ENCODE measurements at regions of chr12 and their contacts with region 1.

Region 1: GRCh38 chr12:546921-547845 is 87.4 kb downstream of the B4GALNT3 start:
- DNase-seq: peak in 1 of 2 experiments; percentile 89
- H3K4me3 ChIP-seq: no peak overlapping the region
- H3K27ac ChIP-seq: no peak overlapping the region
- H3K4me1 ChIP-seq: peaks cover 0 to 8% (median 4%) of the 10 kb centered on the region in 4 experiments; a peak in 3 of 7 replicates
- H3K27me3 ChIP-seq: no peaks in the 10 kb centered on the region
- CTCF ChIP-seq: peak; percentile 92 to 99 (median 94)
- EP300 ChIP-seq: no peak
- POLR2A ChIP-seq: no peak
- RAD21 ChIP-seq: peak; percentile 99

Region 2: GRCh38 chr12:442235-442884 is 104.8 kb before region 1 on chr12:
- CTCF ChIA-PET with region 1: interaction called, 163 read pairs
- POLR2A ChIA-PET with region 1: interaction called, 8 read pairs
- DNase-seq: peak in 1 of 2 experiments; percentile 88
- H3K4me3 ChIP-seq: no peak overlapping the region
- H3K27ac ChIP-seq: no peak overlapping the region
- H3K4me1 ChIP-seq: no peaks in the 10 kb centered on the region
- H3K27me3 ChIP-seq: no peaks in the 10 kb centered on the region
- CTCF ChIP-seq: peak; percentile 41 to 86 (median 76)
- EP300 ChIP-seq: no peak
- POLR2A ChIP-seq: no peak
- RAD21 ChIP-seq: peak; percentile 64 to 77

Region 3: GRCh38 chr12:464484-465267 is 82.5 kb before region 1 on chr12:
- CTCF ChIA-PET with region 1: interaction called, 163 read pairs
- POLR2A ChIA-PET with region 1: no interaction called
- DNase-seq: no peak
- H3K4me3 ChIP-seq: no peak overlapping the region
- H3K27ac ChIP-seq: no peak overlapping the region
- H3K4me1 ChIP-seq: peaks cover 0 to 4% (median 0%) of the 10 kb centered on the region in 4 experiments; a peak in 2 of 7 replicates
- H3K27me3 ChIP-seq: peaks cover 0 to 20% (median 8%) of the 10 kb centered on the region in 4 experiments; a peak in 5 of 7 replicates
- CTCF ChIP-seq: no peak
- EP300 ChIP-seq: no peak
- POLR2A ChIP-seq: no peak
- RAD21 ChIP-seq: no peak

Region 4: DNA sequence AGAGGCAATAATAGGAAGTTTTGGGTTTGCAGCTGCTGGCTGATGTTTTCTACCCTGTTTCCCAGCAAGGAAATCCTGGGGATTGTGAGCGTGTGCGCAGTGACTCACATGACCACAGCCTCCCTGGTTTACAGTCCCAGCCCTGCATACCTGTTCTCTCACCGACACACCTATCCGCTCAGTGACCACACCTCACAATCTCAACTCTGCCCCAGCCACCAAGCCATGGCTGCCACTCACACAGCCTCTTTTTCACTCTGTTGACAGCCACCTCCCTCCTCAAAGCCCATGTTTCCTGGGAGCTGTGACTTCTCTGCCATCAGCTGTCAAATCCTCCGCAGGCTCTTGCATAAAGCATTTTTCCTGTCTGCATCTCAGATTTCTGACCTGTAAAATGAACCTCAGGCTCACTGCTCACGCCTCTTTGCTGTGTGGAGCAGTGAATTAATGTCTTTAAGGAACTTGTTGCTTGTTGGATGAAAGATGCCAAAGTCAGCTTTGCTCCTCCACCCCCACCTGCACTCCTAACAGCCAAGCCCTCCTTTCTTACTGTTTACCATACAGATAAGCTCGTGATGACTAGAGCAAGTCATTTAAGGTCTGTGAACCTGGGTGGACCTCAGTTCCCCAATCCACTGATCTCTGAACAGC is 43.9 kb before region 1 on chr12:
- CTCF ChIA-PET with region 1: interaction called, 11 read pairs
- POLR2A ChIA-PET with region 1: no interaction called
- DNase-seq: no peak
- H3K4me3 ChIP-seq: no peak overlapping the region
- H3K27ac ChIP-seq: no peak overlapping the region
- H3K4me1 ChIP-seq: peaks cover 0 to 6% (median 3%) of the 10 kb centered on the region in 4 experiments; a peak in 6 of 7 replicates
- H3K27me3 ChIP-seq: no peaks in the 10 kb centered on the region
- CTCF ChIP-seq: no peak
- EP300 ChIP-seq: no peak
- POLR2A ChIP-seq: no peak
- RAD21 ChIP-seq: no peak

Region 5: DNA sequence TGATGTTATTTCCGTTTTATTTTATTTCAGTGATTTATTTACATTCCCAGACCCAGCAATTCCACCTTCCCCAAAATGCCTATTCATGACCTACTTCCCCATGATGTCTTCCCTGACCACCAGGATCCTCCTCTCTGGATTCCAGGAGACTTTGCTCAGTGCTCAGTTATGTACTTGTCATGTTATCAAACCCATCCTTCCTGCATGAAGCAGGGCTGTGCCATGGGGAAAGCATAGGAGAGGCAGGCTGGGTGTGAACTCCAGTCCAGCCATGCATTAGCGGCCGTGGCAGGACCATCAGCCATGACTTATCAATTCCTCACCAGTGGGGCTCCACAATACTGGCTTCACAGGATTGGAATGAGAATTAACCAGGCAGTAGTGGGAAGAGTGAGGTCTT is 29.6 kb before region 1 on chr12:
- CTCF ChIA-PET with region 1: interaction called, 25 read pairs
- POLR2A ChIA-PET with region 1: interaction called, 5 read pairs
- DNase-seq: no peak
- H3K4me3 ChIP-seq: no peak overlapping the region
- H3K27ac ChIP-seq: no peak overlapping the region
- H3K4me1 ChIP-seq: peaks cover 0 to 3% (median 0%) of the 10 kb centered on the region in 4 experiments; a peak in 1 of 7 replicates
- H3K27me3 ChIP-seq: no peaks in the 10 kb centered on the region
- CTCF ChIP-seq: no peak
- EP300 ChIP-seq: no peak
- POLR2A ChIP-seq: no peak
- RAD21 ChIP-seq: no peak

Region 6: DNA sequence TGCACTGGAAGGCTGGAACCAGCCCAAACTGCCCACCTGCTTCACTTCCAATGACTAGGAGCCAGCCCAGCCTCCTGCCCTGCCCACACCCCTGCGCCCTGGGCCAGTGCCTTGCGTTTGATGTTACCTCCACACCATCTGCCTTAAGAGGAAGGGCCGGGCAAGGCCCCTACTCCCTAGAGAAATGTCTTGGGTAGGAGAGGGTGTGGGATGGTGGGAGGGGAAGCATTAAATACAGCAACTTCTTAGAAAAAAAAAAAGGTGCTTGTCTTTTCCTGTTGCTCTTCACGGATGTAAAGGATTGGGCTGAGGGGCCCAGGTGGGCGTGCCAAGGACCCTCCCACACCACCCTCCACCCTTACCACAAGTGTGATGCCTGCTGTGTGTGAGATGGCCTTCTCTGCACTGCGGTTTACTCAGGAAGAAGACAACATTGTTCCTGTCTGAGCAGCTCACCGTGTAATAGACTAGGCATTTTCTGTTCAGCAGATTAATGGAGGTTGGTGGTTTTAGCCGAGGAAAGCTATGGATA is 16.1 kb after region 1 on chr12:
- CTCF ChIA-PET with region 1: interaction called, 15 read pairs
- POLR2A ChIA-PET with region 1: no interaction called
- DNase-seq: no peak
- H3K4me3 ChIP-seq: no peak overlapping the region
- H3K27ac ChIP-seq: no peak overlapping the region
- H3K4me1 ChIP-seq: no peaks in the 10 kb centered on the region
- H3K27me3 ChIP-seq: no peaks in the 10 kb centered on the region
- CTCF ChIP-seq: no peak
- EP300 ChIP-seq: no peak
- POLR2A ChIP-seq: no peak
- RAD21 ChIP-seq: no peak

Region 7: DNA sequence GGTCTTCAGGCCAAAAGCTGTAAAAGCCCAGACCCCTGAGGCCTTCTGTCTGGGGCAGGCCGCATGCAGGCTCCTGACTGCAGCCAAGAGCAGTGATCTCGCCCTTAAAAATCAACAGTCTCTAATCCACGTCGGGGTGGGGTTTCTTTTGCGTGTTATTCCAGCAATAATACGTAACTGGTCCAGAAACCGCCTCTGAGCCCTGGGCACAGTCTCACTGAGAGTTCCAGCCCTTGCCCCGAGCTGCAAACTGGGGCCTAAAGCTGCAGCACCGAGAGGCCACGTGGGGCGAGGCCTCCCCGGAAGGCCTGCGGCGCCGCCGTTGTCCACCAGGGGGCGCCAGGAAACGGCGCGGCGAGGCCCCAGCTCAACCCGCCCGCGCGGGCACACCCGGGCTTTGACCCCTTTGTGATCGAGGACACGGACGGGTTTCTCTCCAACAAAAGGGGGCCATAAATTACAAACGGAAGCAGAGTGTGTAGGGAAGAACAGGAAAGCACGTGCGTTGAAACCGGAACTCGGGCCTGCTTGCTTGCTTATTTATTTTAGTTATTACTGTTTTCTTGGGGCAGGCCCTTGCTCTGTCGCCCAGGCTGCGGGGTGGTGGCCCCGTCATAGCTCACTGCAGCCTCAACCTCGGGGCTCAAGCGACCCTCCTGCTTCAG is 28.9 kb after region 1 on chr12:
- CTCF ChIA-PET with region 1: interaction called, 11 read pairs
- POLR2A ChIA-PET with region 1: interaction called, 3 read pairs
- DNase-seq: peak in 1 of 2 experiments; percentile 96
- H3K4me3 ChIP-seq: no peak overlapping the region; a peak in 1 of 8 replicates
- H3K27ac ChIP-seq: no peak overlapping the region
- H3K4me1 ChIP-seq: peaks cover 0 to 10% (median 3%) of the 10 kb centered on the region in 4 experiments; a peak in 6 of 7 replicates
- H3K27me3 ChIP-seq: peaks cover 0 to 9% (median 7%) of the 10 kb centered on the region in 4 experiments; a peak in 6 of 7 replicates
- CTCF ChIP-seq: peak; percentile 93 to 97 (median 94)
- EP300 ChIP-seq: no peak
- POLR2A ChIP-seq: peak in 1 of 2 experiments; percentile 43; a peak in 1 of 3 replicates
- RAD21 ChIP-seq: peak; percentile 82 to 89

Region 8: DNA sequence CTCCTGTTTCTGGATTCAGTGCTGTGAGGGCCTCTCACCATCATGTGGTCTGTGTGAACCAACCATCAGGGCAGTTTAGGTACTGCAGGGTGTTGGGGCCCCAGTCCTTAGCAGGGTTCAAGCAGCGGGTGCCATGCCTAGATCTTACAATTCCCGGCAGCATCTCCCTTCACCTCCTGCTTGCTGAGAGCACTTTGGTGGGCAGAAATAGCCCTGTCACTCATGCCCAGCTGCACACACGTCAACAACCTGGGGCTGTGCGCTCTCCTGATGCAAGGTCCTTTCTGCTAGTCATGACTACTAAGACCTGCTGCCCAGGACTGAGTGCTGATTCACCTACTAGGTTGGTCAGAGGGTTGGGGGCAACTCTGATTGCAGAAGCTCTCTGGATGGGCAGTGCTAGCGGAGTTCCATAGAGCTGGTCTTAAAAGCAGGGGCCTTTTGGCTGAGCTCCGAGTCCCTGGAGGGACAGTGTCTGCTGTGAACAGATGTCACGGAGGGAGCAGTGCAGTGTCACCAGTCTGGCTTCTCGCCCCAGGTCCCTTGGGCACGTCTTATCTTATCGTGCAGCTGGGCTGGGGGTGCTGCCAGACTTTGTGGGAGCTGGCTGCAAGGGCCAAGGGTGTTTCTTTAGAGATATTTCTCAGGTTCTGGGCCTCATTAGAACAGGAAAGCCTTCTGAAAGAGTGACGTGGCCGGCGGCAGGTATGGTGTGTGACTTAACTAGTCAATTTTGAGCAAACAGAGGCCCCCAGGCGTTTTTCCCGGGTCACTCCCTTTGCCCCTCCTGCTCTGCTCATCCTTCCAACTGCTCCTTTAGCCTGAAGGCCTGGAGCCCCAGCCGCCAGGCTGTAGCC is 44.2 kb after region 1 on chr12:
- CTCF ChIA-PET with region 1: no interaction called
- POLR2A ChIA-PET with region 1: no interaction called
- DNase-seq: no peak
- H3K4me3 ChIP-seq: no peak overlapping the region
- H3K27ac ChIP-seq: no peak overlapping the region
- H3K4me1 ChIP-seq: no peaks in the 10 kb centered on the region
- H3K27me3 ChIP-seq: no peaks in the 10 kb centered on the region
- CTCF ChIP-seq: peak in 2 of 3 experiments; percentile 11 to 41; a peak in 2 of 4 replicates
- EP300 ChIP-seq: no peak
- POLR2A ChIP-seq: no peak
- RAD21 ChIP-seq: no peak; a peak in 1 of 4 replicates

Region 9: DNA sequence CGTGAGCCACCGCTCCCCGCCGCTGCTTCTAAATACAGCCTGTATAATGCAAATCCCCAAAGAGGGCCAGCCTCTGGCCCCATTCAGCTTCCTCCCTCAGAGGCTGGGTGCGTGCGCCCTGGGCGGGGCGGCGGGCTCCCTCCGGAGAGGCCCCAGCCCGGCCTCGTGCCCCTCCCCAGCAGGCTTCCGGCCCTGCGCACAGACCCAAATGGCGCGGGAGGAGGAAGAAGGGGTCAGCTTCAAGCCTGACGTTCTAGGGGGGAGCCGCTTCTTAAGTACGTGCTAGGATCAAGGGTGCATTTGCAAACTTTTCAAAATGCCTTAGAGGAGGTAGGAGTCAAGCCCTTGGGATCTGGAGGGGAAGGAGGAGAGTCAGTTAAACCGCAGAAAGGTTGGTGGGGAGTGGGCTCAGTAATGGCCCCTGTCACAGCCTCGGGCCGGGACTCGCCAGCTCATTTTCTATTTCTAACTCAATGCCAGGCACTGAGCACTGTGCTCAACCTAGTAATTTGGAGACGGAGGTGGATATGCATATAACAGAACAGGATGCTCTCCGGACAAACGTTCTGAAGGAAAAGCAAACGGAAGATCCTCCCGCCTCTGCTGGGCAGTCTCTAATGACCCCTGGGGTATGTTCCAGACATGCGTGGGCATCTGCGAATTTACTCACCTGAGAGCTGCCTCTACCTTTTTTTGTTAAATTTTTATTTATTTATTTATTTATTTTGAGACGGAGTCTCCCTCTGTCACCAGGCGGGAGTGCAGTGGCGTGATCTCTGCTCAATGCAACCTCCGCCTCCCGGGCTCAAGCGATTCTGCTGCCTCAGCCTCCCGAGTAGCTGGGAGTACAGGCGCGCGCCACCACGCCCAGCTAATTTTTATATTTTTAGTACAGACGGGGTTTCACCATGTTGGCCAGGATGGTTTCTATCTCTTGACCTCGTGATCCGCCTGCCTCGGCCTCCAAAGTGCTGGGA is 83.8 kb after region 1 on chr12:
- CTCF ChIA-PET with region 1: no interaction called
- POLR2A ChIA-PET with region 1: no interaction called
- DNase-seq: peak in 1 of 2 experiments; percentile 69
- H3K4me3 ChIP-seq: peak overlapping the region in 2 of 4 experiments; percentile 26 to 41; a peak in 5 of 8 replicates
- H3K27ac ChIP-seq: no peak overlapping the region
- H3K4me1 ChIP-seq: peaks cover 6 to 14% (median 13%) of the 10 kb centered on the region in 4 experiments
- H3K27me3 ChIP-seq: no peaks in the 10 kb centered on the region
- CTCF ChIP-seq: no peak
- EP300 ChIP-seq: no peak
- POLR2A ChIP-seq: no peak
- RAD21 ChIP-seq: no peak

Measured in H1 (cell line).